Breast epithelium (tissue), 4 donors: ENCODE measurements at regions of chr10 and their contacts with region 1.

Region 1: DNA sequence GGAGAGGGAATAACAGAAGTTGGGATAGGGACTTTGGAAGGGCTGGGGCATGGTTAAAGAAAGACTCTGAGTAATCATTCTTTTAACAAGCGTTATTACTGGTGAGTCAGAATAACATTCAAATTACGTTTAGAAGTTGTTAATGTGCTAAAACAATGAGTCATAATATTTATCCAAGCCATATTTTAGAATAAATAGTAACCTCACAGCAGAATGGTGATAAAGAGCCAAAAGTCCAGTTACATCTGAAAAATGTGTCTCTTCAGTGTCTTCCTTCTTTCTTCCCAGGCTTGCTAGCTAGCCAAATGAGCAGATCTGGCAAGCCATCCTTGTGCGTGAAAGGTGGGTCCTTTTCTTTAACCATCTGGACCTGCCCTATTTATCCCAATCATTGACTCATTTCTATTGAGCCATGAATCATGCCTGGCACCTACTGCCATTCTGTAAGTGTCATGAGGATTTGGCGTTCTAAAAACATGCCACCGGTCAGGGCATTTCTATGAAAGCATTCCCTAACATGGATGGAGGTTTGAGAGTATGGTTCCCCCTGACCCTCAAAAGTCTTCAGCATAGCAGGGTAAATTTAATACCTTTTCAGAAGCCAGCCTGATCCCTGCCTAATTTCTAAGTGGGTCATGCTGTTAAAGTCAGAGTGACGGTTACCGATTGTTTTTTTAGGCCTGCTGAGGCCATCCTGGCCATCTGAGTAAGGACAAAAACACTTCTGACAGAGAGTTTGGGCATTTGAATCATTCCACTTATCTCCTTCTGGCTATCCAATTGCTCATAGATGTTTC is 26.8 kb downstream of the MYPN start:
- DNase-seq: no peak
- H3K4me3 ChIP-seq: no peak overlapping the region
- H3K27ac ChIP-seq: peak overlapping the region in 1 of 2 donors; percentile 28
- H3K4me1 ChIP-seq: no peaks in the 10 kb centered on the region
- H3K27me3 ChIP-seq: no peaks in the 10 kb centered on the region
- CTCF ChIP-seq: no peak
- POLR2A ChIP-seq: no peak

Region 2: GRCh38 chr10:66463611-66464010 is 1672.5 kb before region 1 on chr10:
- intact Hi-C with region 1: loop called (anchors 10 kb)
- DNase-seq: no peak
- H3K4me3 ChIP-seq: no peak overlapping the region
- H3K27ac ChIP-seq: no peak overlapping the region
- H3K4me1 ChIP-seq: no peaks in the 10 kb centered on the region
- H3K27me3 ChIP-seq: no peaks in the 10 kb centered on the region
- CTCF ChIP-seq: no peak
- POLR2A ChIP-seq: no peak

Region 3: DNA sequence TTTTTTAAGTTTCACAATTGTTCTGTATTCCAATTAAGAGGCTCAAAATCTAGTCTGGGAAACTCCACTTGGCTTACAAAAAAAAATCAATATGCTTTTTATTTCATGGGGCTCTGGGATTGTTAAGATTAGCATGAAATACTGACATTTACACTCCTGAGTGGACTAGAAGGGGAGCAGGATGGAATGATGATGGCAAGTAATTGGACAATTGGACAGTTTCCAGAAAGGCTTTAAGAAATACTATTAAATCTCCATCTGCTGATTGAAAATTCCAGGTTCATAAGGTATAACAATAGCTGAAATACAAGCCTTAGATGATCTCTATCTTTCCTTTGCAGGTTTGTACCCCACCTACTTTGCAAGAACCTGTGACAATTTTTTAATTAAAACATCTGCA is 1025.8 kb before region 1 on chr10:
- intact Hi-C with region 1: no loop called
- DNase-seq: no peak
- H3K4me3 ChIP-seq: no peak overlapping the region
- H3K27ac ChIP-seq: no peak overlapping the region
- H3K4me1 ChIP-seq: no peaks in the 10 kb centered on the region
- H3K27me3 ChIP-seq: no peaks in the 10 kb centered on the region
- CTCF ChIP-seq: no peak
- POLR2A ChIP-seq: no peak

Region 4: GRCh38 chr10:68067029-68067428 is 69.1 kb before region 1 on chr10:
- intact Hi-C with region 1: no loop called
- DNase-seq: no peak
- H3K4me3 ChIP-seq: no peak overlapping the region
- H3K27ac ChIP-seq: no peak overlapping the region
- H3K4me1 ChIP-seq: no peaks in the 10 kb centered on the region
- H3K27me3 ChIP-seq: no peaks in the 10 kb centered on the region
- CTCF ChIP-seq: no peak
- POLR2A ChIP-seq: no peak